ENCODE measurements at regions of chr10 and their contacts with region 1.

Region 1: GRCh38 chr10:99435986-99436638 is 5.7 kb upstream of the GOT1 start:
- DNase-seq: no peak
- ATAC-seq: peak; percentile 77
- H3K4me3 ChIP-seq: no peak overlapping the region
- H3K27ac ChIP-seq: no peak overlapping the region
- H3K4me1 ChIP-seq: no peaks in the 10 kb centered on the region
- H3K27me3 ChIP-seq: no peaks in the 10 kb centered on the region
- CTCF ChIP-seq: peak; percentile 24 to 59 (median 44); a peak in 5 of 6 replicates
- EP300 ChIP-seq: no peak
- POLR2A ChIP-seq: no peak
- RAD21 ChIP-seq: peak; percentile 64

Region 2: GRCh38 chr10:99403674-99404073 is 32.4 kb before region 1 on chr10:
- CTCF ChIA-PET with region 1: interaction called, 15 read pairs
- POLR2A ChIA-PET with region 1: no interaction called
- RAD21 ChIA-PET with region 1: no interaction called
- SMC1A ChIA-PET with region 1: no interaction called
- in situ Hi-C with region 1: no loop called
- intact Hi-C with region 1: no loop called
- DNase-seq: no peak
- ATAC-seq: no peak
- H3K4me3 ChIP-seq: no peak overlapping the region
- H3K27ac ChIP-seq: no peak overlapping the region
- H3K4me1 ChIP-seq: no peaks in the 10 kb centered on the region
- H3K27me3 ChIP-seq: no peaks in the 10 kb centered on the region
- CTCF ChIP-seq: no peak
- EP300 ChIP-seq: no peak
- POLR2A ChIP-seq: no peak
- RAD21 ChIP-seq: no peak

Region 3: DNA sequence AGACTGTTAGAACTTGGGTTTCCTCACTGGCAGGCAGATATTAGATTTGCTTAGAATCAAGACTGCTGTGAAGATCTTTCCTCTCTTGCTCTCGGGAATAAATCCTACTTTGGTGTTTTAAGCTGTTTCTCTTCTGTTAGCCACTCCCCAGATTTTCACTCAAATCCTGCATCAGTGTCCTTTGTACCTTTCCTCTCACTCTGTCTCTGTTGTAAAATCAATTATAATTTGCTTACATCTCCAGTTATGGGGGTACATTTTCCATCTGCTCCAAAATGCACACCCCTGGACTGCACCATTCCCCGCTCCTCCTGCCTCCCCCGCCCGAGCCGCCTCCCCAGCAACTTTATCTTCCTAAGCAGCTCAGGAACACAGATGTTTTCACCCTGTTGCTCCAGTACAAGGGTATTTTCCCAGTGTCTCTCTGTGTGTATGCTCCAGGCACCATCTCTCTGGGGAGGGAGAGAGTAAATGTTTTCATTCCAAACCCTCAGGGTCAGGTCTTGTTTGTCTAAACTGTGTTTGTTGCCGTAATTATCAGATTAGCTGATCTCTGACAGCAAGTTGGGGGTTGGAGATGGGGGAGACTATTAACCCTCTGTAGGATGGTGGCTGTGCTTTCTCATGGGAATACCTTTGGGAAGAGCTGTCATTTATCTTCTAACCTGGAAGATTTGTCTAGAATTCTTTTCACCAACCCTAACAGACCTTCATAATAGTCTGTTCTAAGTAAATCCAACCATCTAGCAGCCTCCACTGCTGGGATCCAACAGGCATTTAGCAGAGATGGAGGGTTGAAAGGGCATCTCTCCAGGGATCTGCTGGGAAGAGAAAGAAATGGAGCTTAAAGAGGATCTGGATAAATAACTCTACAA is 14.7 kb after region 1 on chr10:
- CTCF ChIA-PET with region 1: interaction called, 18 read pairs
- POLR2A ChIA-PET with region 1: no interaction called
- RAD21 ChIA-PET with region 1: no interaction called
- SMC1A ChIA-PET with region 1: interaction called, 5 read pairs
- in situ Hi-C with region 1: no loop called
- intact Hi-C with region 1: no loop called
- DNase-seq: no peak
- ATAC-seq: no peak
- H3K4me3 ChIP-seq: no peak overlapping the region
- H3K27ac ChIP-seq: no peak overlapping the region
- H3K4me1 ChIP-seq: no peaks in the 10 kb centered on the region
- H3K27me3 ChIP-seq: peaks cover 0 to 8% of the 10 kb centered on the region in 2 experiments; a peak in 1 of 4 replicates
- CTCF ChIP-seq: no peak
- EP300 ChIP-seq: no peak
- POLR2A ChIP-seq: no peak
- RAD21 ChIP-seq: no peak

Region 4: DNA sequence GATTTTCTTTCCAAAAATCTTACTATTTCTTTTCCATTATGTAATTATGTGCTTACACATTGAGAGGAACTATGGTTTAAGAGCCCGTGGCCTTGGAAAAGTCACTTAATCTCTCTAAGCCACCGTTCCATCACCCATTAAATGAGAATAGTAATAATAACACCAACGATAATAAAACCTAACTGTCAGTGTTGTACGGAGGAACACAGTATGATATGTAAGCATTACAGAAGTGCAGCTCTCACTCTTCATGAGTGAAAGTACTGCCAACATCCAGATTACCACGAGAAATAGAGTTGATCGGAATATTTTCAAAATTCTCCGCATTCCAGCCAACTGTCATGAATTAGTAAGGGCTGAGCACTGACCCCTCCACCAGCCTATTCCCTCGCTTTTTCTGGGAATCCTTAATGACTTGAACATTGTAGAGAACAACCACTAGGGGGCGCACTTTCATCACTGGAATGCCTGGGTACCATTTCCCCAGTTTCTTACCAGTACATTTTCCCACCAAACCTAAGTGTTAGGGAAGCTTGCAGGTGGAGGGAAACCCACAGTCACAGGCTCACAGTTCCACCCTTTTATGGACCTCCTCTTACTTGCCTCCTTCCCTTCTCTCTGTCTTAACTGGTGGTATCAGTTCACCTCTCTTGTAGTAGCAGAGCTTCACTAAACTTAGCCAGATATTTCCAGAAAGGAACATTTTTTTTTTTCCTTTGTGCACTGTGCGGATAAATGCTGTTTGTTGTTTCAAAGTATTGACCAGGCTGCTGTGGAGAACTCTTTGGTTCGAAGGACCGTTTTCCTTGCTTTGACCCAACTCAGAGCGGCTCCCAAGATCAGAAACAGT is 124.4 kb after region 1 on chr10:
- CTCF ChIA-PET with region 1: interaction called, 43 read pairs
- POLR2A ChIA-PET with region 1: no interaction called
- RAD21 ChIA-PET with region 1: interaction called, 4 read pairs
- SMC1A ChIA-PET with region 1: interaction called, 3 read pairs
- in situ Hi-C with region 1: no loop called
- intact Hi-C with region 1: loop called (anchors 2 kb)
- DNase-seq: no peak
- ATAC-seq: no peak
- H3K4me3 ChIP-seq: no peak overlapping the region
- H3K27ac ChIP-seq: no peak overlapping the region
- H3K4me1 ChIP-seq: peaks cover 13% of the 10 kb centered on the region
- H3K27me3 ChIP-seq: no peaks in the 10 kb centered on the region; a peak in 1 of 4 replicates
- CTCF ChIP-seq: peak; percentile 65 to 74 (median 67)
- EP300 ChIP-seq: no peak
- POLR2A ChIP-seq: no peak
- RAD21 ChIP-seq: peak; percentile 69

Region 5: GRCh38 chr10:99620713-99621453 is 184.8 kb after region 1 on chr10:
- CTCF ChIA-PET with region 1: interaction called, 233 read pairs
- POLR2A ChIA-PET with region 1: interaction called, 8 read pairs
- RAD21 ChIA-PET with region 1: interaction called, 70 read pairs
- SMC1A ChIA-PET with region 1: interaction called, 38 read pairs
- in situ Hi-C with region 1: no loop called
- intact Hi-C with region 1: loop called (anchors 2 kb)
- DNase-seq: peak; percentile 26
- ATAC-seq: peak; percentile 95
- H3K4me3 ChIP-seq: peak overlapping the region; percentile 78
- H3K27ac ChIP-seq: peak overlapping the region; percentile 89
- H3K4me1 ChIP-seq: peaks cover 8% of the 10 kb centered on the region; the same call in 1 of the 2 replicates
- H3K27me3 ChIP-seq: no peaks in the 10 kb centered on the region
- CTCF ChIP-seq: no peak
- EP300 ChIP-seq: no peak; a peak in 1 of 4 replicates
- POLR2A ChIP-seq: peak; percentile 89
- RAD21 ChIP-seq: no peak

Measured in GM12878 (cell line).